ENCODE measurements at regions of chr6 and their contacts with region 1.

Region 1: DNA sequence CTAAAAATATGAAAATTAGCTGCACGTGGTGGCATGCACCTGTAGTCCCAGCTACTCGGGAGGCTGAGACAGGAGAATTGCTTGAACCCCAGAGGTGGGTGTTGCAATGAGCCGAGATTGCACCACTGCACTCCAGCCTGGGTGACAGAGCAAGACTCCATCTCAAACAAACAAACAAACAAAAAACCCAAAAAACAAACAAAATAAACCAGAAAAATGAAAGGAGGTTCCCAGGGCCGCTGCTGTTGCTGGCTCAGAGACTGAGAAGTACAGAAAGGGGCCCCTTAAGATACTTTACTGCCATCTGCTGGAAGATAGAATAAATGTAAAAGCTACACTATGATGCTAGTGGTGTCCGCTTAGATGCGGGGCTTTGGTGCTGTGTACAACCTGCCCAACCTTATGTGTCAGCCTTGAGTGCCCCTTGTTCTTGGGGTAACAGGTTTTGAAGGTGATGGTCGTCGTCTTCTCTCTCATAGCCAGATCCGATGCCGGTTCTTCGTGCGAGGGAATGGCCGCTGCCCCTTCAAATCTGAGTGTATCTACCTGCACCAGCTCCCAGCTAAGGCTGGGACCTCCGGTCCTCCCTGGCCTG is 2.8 kb upstream of the FANCE start:
- DNase-seq: no peak
- ATAC-seq: peak; percentile 71
- H3K4me3 ChIP-seq: no peak overlapping the region
- H3K27ac ChIP-seq: no peak overlapping the region
- H3K4me1 ChIP-seq: no peaks in the 10 kb centered on the region
- H3K27me3 ChIP-seq: no peaks in the 10 kb centered on the region

Region 2: DNA sequence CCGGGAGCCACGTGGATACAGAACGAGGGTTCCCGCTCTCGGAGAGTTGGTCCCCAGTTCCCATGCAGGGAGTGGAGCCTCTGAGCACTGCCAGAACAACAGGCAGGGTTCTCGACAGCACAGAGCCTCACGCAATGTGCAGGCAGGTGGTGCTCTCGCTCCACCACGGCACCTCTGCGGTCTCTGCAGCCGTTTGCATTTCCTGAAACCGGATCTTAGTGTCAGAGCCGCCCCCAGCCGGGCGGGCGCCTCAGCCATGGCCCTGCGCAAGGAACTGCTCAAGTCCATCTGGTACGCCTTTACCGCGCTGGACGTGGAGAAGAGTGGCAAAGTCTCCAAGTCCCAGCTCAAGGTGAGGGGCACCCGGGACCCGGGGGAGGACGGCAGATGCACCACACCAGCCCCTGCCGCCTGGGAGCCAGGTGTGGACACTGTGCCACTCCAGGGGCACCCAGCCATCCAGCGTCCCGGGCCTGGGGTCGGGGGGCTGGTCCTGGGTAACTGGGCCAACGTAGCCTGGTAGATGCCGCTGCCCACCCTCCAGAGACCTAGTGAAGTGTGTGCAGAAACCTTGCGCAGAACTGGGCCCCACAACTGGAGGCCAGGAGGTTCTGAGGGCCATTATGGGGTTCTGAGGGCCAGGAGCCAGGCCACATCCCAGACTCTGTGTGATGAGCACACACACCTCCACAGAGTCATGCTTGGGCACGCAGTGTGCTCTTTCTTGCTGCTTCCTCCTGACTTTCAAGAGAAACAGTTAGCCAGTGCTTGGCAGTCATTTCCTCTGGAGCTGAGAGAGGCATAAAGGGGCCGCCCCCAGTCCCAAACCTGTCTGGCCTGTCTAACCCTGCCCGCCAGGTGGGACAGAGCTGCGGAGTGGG is 151.5 kb before region 1 on chr6 and contains the start of gene DEF6:
- intact Hi-C with region 1: no loop called
- DNase-seq: peak; percentile 87 to 89
- ATAC-seq: peak; percentile 88
- H3K4me3 ChIP-seq: no peak within 1 kb of the TSS
- H3K27ac ChIP-seq: no peak within 1 kb of the TSS
- H3K4me1 ChIP-seq: no peaks in the 10 kb centered on the region
- H3K27me3 ChIP-seq: no peaks in the 10 kb centered on the region
- total RNA-seq, gene DEF6: 9.9 to 13.0 TPM

Region 3: DNA sequence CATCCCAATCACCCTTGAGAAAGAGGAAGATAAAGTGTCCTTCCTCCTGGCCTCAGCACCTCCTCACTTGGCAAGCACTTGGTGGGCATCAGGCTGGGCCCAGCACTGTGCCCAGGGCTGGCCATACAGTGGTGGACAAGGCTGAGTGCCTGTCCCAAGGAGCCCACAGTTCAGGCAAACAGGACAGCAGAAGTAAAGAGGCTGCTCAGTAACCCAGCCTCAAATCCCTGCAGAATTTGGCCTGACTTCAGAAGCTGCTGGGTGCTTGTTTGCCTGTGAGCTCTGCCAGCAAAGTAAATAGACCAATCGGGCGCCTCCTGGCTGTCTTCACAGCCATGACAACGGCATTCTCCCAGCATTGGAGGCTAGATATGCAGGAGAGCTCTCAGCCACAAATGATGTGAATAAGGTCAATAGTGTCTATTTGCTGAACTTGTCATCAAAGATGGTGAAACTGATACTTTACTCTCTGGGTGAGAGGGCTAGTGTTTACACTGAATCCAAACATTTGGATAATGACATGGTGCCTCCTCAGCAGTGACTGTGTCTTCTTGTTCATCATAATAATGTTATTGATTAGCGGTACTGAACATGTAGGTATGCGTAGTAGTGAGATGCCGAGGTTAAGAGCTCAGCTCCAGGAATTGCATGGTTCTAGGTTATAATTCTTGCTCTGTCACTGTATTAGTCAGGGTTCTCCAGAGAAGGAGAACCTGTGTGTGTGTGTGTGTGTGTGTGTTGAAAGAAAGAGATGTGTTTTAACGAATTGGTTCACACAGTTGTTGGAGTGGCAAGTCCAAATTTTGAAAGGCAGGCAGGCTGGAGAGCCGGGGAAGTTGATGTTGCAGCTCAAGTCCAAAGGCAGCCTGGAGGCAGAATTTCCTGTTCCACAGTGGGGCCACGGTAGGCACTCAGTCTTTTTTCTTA is 34.1 kb before region 1 on chr6:
- intact Hi-C with region 1: loop called in 1 of 2 experiments (anchors 2 kb)
- DNase-seq: peak; percentile 76 to 81
- ATAC-seq: peak; percentile 76
- H3K4me3 ChIP-seq: no peak overlapping the region
- H3K27ac ChIP-seq: no peak overlapping the region
- H3K4me1 ChIP-seq: no peaks in the 10 kb centered on the region
- H3K27me3 ChIP-seq: no peaks in the 10 kb centered on the region

Region 4: DNA sequence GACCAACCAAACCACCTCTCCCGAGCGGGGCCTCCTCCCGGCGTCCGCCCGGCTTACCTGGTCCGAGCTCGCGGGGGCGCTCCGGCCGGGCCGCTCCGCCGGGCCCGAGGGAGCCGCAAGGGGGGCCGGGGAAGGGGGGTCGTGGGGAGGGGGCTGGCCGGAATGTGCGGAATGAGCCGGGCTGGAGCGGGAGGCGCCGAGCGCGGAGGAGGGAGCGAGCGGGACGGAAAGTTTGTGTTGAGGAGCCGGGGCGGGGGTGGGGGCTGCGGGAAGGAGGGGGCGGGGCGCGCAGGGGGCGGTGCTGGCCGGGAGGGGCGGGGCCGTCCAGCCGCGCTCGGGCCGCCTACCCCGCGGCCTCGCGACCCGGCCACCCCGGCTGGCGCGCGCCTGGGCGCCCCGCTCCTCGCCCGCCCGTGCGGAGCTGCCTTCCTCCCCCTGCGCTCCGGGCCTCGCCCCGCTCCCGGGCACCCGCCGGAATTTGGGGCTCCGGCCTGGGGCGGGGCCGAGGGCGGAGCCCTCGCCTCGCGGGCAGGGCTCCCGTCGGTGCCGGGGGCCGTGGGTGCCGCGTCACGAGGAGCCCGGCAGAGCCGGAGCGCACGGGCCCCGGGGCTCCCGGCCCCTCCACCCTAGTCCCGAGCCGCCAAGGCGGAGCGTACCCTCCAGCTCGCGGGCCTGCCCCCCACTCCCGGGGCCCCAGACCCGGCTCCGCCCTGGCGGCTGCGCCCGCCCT is 47.6 kb after region 1 on chr6 and contains the start of gene TEAD3:
- intact Hi-C with region 1: no loop called
- DNase-seq: peak in 1 of 2 donors; percentile 92
- ATAC-seq: peak; percentile 61
- H3K4me3 ChIP-seq: peak within 1 kb of the TSS; percentile 95
- H3K27ac ChIP-seq: peak within 1 kb of the TSS; percentile 79 to 87
- H3K4me1 ChIP-seq: no peaks in the 10 kb centered on the region
- H3K27me3 ChIP-seq: no peaks in the 10 kb centered on the region
- total RNA-seq, gene TEAD3: 43.5 to 78.0 TPM

Measured in aorta (tissue), 5 donors.